ENCODE measurements at regions of chr1 and their contacts with region 1.

Region 1: DNA sequence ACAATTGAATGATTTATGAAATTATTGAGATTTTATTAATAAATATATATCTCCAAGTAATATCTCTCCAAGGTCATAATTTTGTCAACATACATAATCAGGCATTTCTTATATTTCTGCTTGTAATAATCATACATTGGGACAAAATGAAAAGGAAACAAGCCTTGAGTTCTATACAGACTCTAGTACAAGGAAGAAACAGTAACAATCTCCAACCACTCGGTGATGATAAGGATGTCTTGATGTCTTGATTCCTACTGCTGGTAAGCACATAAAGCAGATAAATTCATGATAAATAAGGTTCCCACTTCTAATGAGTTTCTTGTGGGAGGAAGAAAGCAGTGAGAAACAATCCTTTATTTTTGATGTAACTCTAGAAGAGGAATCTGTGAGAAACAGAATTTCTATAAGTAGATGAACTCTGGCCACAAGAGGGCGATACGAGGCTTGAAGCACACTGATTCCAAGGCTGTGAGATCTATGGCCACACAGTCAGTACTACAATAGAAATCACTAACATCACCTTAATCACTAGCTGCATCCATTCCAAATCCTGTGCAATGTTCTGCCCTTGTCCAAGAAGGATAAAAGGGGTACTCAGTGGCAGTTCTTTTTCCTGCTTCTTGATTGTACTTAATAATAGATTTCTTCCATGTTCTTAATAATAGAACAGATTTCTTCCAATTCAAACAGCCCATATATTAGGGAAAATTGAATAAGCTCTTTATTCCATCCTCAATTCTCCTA is 41.4 kb upstream of the LRRC8B start:
- DNase-seq: peak; percentile 62
- H3K4me3 ChIP-seq: no peak overlapping the region
- H3K27ac ChIP-seq: no peak overlapping the region
- H3K4me1 ChIP-seq: no peaks in the 10 kb centered on the region
- H3K27me3 ChIP-seq: no peaks in the 10 kb centered on the region
- CTCF ChIP-seq: peak; percentile 65 to 83

Region 2: DNA sequence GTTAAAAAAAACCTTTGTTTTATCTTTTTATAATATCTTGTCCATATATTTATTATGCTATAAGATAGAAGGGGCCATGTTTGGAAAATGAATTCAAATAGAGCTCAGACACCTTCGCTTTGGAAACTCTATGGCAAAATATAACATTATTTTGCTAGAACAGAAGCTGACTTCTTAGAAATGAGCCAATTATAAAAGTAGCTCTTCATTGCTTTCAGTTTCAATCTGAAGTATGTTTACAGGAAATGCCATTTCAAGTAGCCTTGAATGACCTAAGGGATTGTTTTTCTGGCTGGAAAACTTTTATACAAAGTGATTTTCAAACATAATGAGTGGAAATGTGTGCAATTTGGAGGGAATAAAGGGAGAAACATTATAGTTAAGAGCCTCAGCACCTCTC is 172.7 kb before region 1 on chr1:
- CTCF ChIA-PET with region 1: no interaction called
- dilution Hi-C with region 1: no loop called
- in situ Hi-C with region 1: no loop called
- intact Hi-C with region 1: no loop called
- DNase-seq: no peak
- H3K4me3 ChIP-seq: no peak overlapping the region
- H3K27ac ChIP-seq: no peak overlapping the region
- H3K4me1 ChIP-seq: peaks cover 30% of the 10 kb centered on the region
- H3K27me3 ChIP-seq: no peaks in the 10 kb centered on the region
- CTCF ChIP-seq: no peak

Region 3: DNA sequence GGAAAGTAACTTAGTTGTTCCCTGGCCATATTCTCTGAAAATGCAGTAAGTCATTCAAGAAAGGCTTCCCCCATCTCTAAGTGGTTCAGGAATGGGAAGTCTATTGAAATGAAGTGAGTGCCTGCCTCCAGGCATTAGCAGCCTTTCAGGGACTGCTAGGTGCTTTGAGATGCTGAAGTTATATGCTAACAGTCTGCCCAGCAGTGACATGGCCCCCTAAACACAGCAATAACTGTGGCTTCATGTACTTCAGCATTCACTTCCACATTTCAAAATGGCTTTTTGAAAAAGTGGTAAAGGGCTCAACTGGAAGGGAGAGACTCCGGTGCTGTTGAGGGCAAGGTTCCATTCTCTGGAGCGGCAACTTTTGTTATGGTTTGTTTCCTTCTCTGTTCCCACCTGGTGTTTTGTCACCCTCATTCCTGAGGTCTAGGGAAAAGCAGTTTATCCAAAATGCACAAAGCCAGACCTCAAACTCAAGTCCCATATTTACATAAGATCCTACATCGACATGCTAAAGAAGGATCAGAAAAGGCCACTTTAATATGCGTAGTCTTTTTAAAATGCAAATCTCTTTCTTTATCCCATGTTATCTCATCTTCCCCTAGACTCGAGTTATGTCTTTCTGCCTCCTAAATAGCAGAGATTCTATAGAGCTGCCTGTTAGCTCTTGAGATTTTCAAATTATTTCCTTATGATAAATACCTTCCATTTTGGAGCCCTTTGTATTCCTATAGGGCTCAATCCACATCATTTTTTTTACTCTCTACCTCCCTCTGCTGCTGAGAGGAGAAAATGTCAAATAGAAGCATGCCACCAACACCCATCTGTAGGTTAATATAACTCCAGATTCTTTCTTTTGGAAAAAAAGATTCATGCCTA is 115.5 kb after region 1 on chr1:
- CTCF ChIA-PET with region 1: interaction called, 4 read pairs
- dilution Hi-C with region 1: no loop called
- in situ Hi-C with region 1: no loop called
- intact Hi-C with region 1: loop called (anchors 1 kb)
- DNase-seq: peak; percentile 29
- H3K4me3 ChIP-seq: no peak overlapping the region
- H3K27ac ChIP-seq: no peak overlapping the region
- H3K4me1 ChIP-seq: peaks cover 4% of the 10 kb centered on the region
- H3K27me3 ChIP-seq: no peaks in the 10 kb centered on the region
- CTCF ChIP-seq: peak; percentile 61 to 66

Measured in mammary epithelial cell (primary cell).